ENCODE measurements at regions of chr6 and their contacts with region 1.

Region 1: DNA sequence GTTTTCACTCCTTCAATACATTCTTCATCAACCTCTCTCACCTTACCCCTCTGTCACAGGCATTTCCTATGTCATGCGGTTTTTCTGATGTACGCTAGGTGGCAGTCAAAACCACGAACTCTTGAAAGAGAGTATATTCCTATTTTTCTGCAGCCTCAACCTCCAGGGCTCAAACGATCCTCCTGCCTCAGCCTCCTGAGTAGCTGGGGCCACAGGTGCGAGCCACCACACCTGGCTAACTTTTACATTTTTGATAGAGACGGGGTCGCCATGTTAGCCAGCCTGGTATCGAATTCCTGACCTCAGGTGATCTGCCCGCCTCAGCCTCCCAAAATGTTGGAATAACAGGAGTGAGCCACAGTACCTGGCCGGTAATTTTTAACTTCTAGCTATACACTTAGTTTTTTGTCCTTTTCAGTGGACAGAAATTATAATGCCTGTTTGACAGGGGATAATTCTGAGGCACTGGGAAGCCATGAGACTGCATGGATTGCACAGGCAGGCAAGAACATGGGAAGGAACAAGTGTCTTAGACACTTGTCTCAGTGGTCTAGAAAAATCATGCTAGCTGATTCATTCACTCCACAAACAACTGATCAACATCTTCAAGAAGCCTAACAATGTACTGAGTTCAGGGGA is 22.5 kb upstream of the HFE start:
- DNase-seq: peak in 1 of 2 donors; percentile 78
- H3K4me3 ChIP-seq: no peak overlapping the region
- H3K27ac ChIP-seq: no peak overlapping the region
- H3K4me1 ChIP-seq: peaks cover 0 to 14% (median 3%) of the 10 kb centered on the region in 4 donors
- H3K27me3 ChIP-seq: no peaks in the 10 kb centered on the region
- CTCF ChIP-seq: peak in 5 of 7 experiments; percentile 58 to 82 (median 71)
- EP300 ChIP-seq: no peak
- POLR2A ChIP-seq: no peak

Region 2: DNA sequence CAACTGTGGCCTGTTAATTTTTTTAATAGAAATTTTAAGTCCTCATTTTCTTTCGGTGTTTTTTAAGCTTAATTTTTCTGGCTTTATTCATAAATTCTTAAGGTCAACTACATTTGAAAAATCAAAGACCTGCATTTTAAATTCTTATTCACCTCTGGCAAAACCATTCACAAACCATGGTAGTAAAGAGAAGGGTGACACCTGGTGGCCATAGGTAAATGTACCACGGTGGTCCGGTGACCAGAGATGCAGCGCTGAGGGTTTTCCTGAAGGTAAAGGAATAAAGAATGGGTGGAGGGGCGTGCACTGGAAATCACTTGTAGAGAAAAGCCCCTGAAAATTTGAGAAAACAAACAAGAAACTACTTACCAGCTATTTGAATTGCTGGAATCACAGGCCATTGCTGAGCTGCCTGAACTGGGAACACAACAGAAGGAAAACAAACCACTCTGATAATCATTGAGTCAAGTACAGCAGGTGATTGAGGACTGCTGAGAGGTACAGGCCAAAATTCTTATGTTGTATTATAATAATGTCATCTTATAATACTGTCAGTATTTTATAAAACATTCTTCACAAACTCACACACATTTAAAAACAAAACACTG is 32.6 kb after region 1 on chr6:
- intact Hi-C with region 1: loop called (anchors 5 kb)
- DNase-seq: peak; percentile 69 to 89
- H3K4me3 ChIP-seq: no peak overlapping the region
- H3K27ac ChIP-seq: no peak overlapping the region
- H3K4me1 ChIP-seq: peaks cover 0 to 3% (median 0%) of the 10 kb centered on the region in 4 donors
- H3K27me3 ChIP-seq: no peaks in the 10 kb centered on the region
- CTCF ChIP-seq: peak in 5 of 7 experiments; percentile 59 to 87 (median 83)
- EP300 ChIP-seq: no peak
- POLR2A ChIP-seq: no peak

Measured in stomach (tissue), 19 donors.